GM12878 (cell line): ENCODE measurements at regions of chr13 and their contacts with region 1.

Region 1: GRCh38 chr13:33642374-33643068 is 175.4 kb upstream of the RFC3 start:
- DNase-seq: no peak
- ATAC-seq: no peak
- H3K4me3 ChIP-seq: no peak overlapping the region
- H3K27ac ChIP-seq: no peak overlapping the region
- H3K4me1 ChIP-seq: peaks cover 12% of the 10 kb centered on the region; the same call in 1 of the 2 replicates
- H3K27me3 ChIP-seq: no peaks in the 10 kb centered on the region
- CTCF ChIP-seq: no peak
- EP300 ChIP-seq: no peak
- POLR2A ChIP-seq: no peak
- RAD21 ChIP-seq: no peak

Region 2: GRCh38 chr13:33409673-33410510 is 232.6 kb before region 1 on chr13:
- CTCF ChIA-PET with region 1: no interaction called
- POLR2A ChIA-PET with region 1: no interaction called
- RAD21 ChIA-PET with region 1: no interaction called
- SMC1A ChIA-PET with region 1: no interaction called
- in situ Hi-C with region 1: no loop called
- intact Hi-C with region 1: no loop called
- DNase-seq: no peak
- ATAC-seq: no peak
- H3K4me3 ChIP-seq: no peak overlapping the region
- H3K27ac ChIP-seq: no peak overlapping the region
- H3K4me1 ChIP-seq: no peaks in the 10 kb centered on the region
- H3K27me3 ChIP-seq: no peaks in the 10 kb centered on the region
- CTCF ChIP-seq: no peak
- EP300 ChIP-seq: no peak
- POLR2A ChIP-seq: no peak
- RAD21 ChIP-seq: no peak

Region 3: GRCh38 chr13:33446821-33447725 is 195.4 kb before region 1 on chr13:
- CTCF ChIA-PET with region 1: no interaction called
- POLR2A ChIA-PET with region 1: no interaction called
- RAD21 ChIA-PET with region 1: no interaction called
- SMC1A ChIA-PET with region 1: no interaction called
- in situ Hi-C with region 1: no loop called
- intact Hi-C with region 1: no loop called
- DNase-seq: no peak
- ATAC-seq: no peak
- H3K4me3 ChIP-seq: no peak overlapping the region
- H3K27ac ChIP-seq: no peak overlapping the region
- H3K4me1 ChIP-seq: no peaks in the 10 kb centered on the region
- H3K27me3 ChIP-seq: no peaks in the 10 kb centered on the region
- CTCF ChIP-seq: no peak
- EP300 ChIP-seq: no peak
- POLR2A ChIP-seq: no peak
- RAD21 ChIP-seq: no peak

Region 4: GRCh38 chr13:33678906-33679657 is 36.6 kb after region 1 on chr13:
- CTCF ChIA-PET with region 1: interaction called, 4 read pairs
- POLR2A ChIA-PET with region 1: no interaction called
- RAD21 ChIA-PET with region 1: interaction called, 13 read pairs
- SMC1A ChIA-PET with region 1: interaction called, 13 read pairs
- in situ Hi-C with region 1: no loop called
- intact Hi-C with region 1: no loop called
- DNase-seq: peak; percentile 98
- ATAC-seq: peak; percentile 97
- H3K4me3 ChIP-seq: peak overlapping the region; percentile 77
- H3K27ac ChIP-seq: peak overlapping the region; percentile 95
- H3K4me1 ChIP-seq: peaks cover 5% of the 10 kb centered on the region; the same call in 1 of the 2 replicates
- H3K27me3 ChIP-seq: no peaks in the 10 kb centered on the region
- CTCF ChIP-seq: no peak
- EP300 ChIP-seq: peak; percentile 75 to 82; a peak in 2 of 4 replicates
- POLR2A ChIP-seq: peak; percentile 90
- RAD21 ChIP-seq: 0 out of 2 replicates have a peak, but pooled peaks have one; percentile 0